ENCODE measurements at regions of chr16 and their contacts with region 1.

Region 1: GRCh38 chr16:2388875-2389433 is 40.3 kb upstream of the CCNF start:
- DNase-seq: no peak
- ATAC-seq: no peak

Region 2: DNA sequence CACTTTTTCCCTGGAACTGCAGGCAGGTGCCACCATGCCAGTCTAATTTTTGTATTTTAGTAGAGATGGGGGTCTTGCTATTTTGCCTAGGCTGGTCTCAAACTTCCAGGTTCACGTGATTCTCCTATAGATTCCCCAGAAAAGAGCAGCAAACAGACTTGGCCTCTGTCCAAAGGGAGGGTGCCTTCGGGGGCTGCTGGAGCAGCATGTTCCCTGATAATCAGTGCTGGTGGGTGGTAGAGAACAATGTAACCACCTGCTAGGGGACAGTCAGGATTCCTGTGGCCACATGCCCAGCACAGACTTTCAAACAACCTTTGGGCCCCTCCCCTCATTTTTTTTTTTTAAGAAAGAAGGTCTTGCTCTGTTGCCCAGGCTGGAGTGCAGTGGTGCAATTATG is 26.1 kb after region 1 on chr16:
- intact Hi-C with region 1: loop called (anchors 1 kb)
- DNase-seq: no peak
- ATAC-seq: no peak